HEK293T (cell line): ENCODE measurements at regions of chr9 and their contacts with region 1.

Region 1: GRCh38 chr9:97921959-97922724 is at the start of gene TRMO:
- DNase-seq: peak; percentile 96

Region 2: GRCh38 chr9:97840521-97840920 is 81.6 kb before region 1 on chr9:
- CTCF ChIA-PET with region 1: no interaction called
- POLR2A ChIA-PET with region 1: no interaction called
- DNase-seq: no peak

Region 3: DNA sequence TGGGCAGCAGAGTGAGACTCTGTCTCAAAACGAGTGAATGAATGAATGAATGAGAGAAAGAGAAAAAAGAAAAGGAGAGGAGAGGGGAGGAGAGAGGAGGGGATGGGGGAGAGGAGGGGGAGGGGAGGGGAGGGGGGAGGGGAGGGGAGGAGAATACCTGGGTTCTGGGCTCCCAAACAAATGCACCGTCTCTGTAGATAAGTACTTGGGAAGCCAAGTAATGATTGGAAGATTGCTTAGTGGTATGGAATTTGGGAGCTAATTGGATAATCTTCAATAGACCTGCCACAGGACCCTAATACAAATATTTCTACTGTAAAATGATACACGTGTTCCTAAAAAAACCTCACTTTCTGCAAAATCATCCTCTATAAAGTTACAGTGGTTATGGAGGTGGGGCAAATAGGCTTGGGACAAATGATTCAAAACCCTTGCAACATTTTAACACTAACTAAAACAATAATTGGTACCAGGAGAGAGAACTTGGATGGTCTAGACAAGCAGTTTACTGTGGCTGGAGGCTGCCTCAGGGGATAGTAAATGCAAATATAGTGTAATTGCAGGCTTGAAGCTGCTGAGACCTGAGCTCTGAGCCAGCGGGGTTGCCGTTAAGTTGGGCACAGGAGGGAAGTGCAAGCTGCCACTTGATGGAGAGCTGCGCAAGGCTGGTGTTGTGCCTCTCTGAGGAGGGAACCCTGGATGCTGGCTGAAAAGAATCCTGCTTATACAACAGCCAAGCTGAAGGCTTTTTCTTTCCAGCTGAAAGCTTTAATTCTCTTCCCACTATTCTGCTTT is 12.4 kb after region 1 on chr9:
- CTCF ChIA-PET with region 1: interaction called, 3 read pairs
- POLR2A ChIA-PET with region 1: interaction called, 10 read pairs
- DNase-seq: peak; percentile 12

Region 4: GRCh38 chr9:97982683-97983588 is 60.8 kb after region 1 on chr9 and contains the start of gene ANP32B:
- CTCF ChIA-PET with region 1: no interaction called
- POLR2A ChIA-PET with region 1: interaction called, 25 read pairs
- DNase-seq: peak; percentile 88

Region 5: GRCh38 chr9:98034593-98035546 is 112.7 kb after region 1 on chr9:
- CTCF ChIA-PET with region 1: interaction called, 10 read pairs
- POLR2A ChIA-PET with region 1: interaction called, 6 read pairs
- DNase-seq: peak; percentile 85

Region 6: DNA sequence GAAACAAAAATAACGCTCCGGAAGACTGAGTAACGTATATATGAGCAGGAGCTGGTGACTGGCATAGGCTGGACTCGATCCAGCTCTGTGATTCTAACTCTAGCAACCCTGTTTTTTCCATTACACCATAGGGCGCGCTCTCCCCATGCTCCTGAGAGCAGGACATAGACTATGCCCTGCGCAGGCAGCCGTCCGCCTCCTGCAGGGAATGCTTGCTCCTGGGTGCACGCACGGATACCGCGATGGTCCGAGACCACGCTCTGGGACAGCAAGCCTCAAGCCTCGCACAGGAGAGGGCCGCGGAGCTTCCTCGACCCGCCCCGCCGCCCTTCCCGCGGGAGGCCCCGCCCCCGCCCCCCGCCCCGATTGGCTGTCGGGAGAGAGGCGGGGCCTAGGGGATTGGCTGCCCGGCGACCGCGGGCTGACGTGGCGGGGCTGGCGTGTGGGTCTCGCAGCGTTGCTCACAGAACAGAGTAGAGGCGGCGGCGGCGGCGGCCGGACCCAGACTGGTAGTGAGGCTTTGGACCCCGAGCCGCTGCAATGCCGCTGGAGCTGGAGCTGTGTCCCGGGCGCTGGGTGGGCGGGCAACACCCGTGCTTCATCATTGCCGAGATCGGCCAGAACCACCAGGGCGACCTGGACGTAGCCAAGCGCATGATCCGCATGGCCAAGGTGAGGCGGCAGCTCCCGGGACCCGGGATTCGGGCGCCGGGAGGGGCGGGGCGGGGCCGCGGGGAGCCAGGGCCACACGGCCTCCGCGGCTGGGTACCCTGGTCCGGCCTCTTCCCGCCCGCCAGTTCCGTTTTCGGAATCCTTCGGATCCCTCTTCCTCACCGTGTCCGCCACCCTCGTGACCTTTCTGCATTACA is 134.4 kb after region 1 on chr9 and contains the start of gene NANS:
- CTCF ChIA-PET with region 1: interaction called, 4 read pairs
- POLR2A ChIA-PET with region 1: interaction called, 12 read pairs
- DNase-seq: peak; percentile 98